ENCODE measurements at regions of chr19 and their contacts with region 1.

Region 1: DNA sequence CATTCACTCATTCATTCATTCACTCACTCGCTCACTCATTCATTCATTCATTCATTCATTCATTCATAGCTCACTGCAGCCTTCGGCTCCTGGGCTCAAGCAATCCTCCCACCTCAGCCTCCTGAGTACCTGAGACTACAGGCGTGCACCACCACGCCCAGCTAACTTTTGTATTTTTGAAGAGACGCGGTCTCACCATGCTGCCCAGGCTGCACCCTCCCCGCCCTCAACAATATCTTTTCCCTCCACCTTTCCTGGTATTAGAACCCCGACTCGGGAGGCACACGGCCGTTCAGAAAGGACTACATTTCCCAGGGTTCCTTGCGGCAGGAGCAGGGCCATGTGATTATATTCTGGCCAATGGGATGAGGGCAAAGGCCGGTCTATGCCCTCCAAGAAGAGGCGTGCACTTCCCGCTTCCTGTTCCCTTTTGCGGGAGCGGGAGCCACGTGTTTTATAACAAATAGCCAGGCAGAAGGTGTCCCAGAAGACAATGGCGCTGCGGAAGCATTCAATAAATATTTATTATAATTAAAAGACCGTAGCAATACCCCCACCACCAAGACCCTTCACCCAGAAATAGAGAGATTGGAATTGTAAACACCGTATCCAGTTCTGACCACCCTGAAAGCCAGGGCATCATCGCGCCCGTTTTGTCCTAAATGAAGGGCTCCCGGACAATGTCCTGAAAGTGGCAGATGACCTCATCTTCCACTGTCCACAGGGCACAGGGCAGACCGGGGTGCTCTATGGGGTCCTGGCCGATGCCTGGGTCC is 15.9 kb downstream of the TICAM1 start:
- DNase-seq: peak; percentile 88
- ATAC-seq: peak; percentile 89
- H3K4me3 Mint-ChIP-seq: peak overlapping the region; percentile 62
- H3K27ac Mint-ChIP-seq: peak overlapping the region; percentile 70
- H3K4me1 Mint-ChIP-seq: peaks cover 12% of the 10 kb centered on the region
- H3K27me3 Mint-ChIP-seq: no peaks in the 10 kb centered on the region
- CTCF ChIP-seq: no peak

Region 2: GRCh38 chr19:4803736-4804695 is 11.6 kb before region 1 on chr19:
- CTCF ChIA-PET with region 1: interaction called, 15 read pairs
- POLR2A ChIA-PET with region 1: interaction called, 3 read pairs
- intact Hi-C with region 1: no loop called
- DNase-seq: peak; percentile 83
- ATAC-seq: peak; percentile 99
- H3K4me3 Mint-ChIP-seq: peak overlapping the region; percentile 15
- H3K27ac Mint-ChIP-seq: no peak overlapping the region
- H3K4me1 Mint-ChIP-seq: no peaks in the 10 kb centered on the region
- H3K27me3 Mint-ChIP-seq: no peaks in the 10 kb centered on the region
- CTCF ChIP-seq: peak; percentile 99

Region 3: GRCh38 chr19:4844348-4845179 is 28.9 kb after region 1 on chr19:
- CTCF ChIA-PET with region 1: interaction called, 310 read pairs
- POLR2A ChIA-PET with region 1: no interaction called
- intact Hi-C with region 1: no loop called
- DNase-seq: no peak
- ATAC-seq: no peak
- H3K4me3 Mint-ChIP-seq: no peak overlapping the region
- H3K27ac Mint-ChIP-seq: no peak overlapping the region
- H3K4me1 Mint-ChIP-seq: peaks cover 5% of the 10 kb centered on the region
- H3K27me3 Mint-ChIP-seq: no peaks in the 10 kb centered on the region
- CTCF ChIP-seq: no peak

Region 4: GRCh38 chr19:4861077-4861543 is 45.5 kb after region 1 on chr19:
- CTCF ChIA-PET with region 1: interaction called, 310 read pairs
- POLR2A ChIA-PET with region 1: no interaction called
- intact Hi-C with region 1: no loop called
- DNase-seq: no peak
- ATAC-seq: no peak
- H3K4me3 Mint-ChIP-seq: no peak overlapping the region
- H3K27ac Mint-ChIP-seq: no peak overlapping the region
- H3K4me1 Mint-ChIP-seq: no peaks in the 10 kb centered on the region
- H3K27me3 Mint-ChIP-seq: no peaks in the 10 kb centered on the region
- CTCF ChIP-seq: no peak

Region 5: GRCh38 chr19:4909897-4910593 is 94.4 kb after region 1 on chr19:
- CTCF ChIA-PET with region 1: interaction called, 65 read pairs
- POLR2A ChIA-PET with region 1: no interaction called
- intact Hi-C with region 1: no loop called
- DNase-seq: peak; percentile 98
- ATAC-seq: peak; percentile 80
- H3K4me3 Mint-ChIP-seq: peak overlapping the region; percentile 95
- H3K27ac Mint-ChIP-seq: peak overlapping the region; percentile 87
- H3K4me1 Mint-ChIP-seq: peaks cover 46% of the 10 kb centered on the region
- H3K27me3 Mint-ChIP-seq: no peaks in the 10 kb centered on the region
- CTCF ChIP-seq: no peak